ENCODE measurements at regions of chr5 and their contacts with region 1.

Region 1: DNA sequence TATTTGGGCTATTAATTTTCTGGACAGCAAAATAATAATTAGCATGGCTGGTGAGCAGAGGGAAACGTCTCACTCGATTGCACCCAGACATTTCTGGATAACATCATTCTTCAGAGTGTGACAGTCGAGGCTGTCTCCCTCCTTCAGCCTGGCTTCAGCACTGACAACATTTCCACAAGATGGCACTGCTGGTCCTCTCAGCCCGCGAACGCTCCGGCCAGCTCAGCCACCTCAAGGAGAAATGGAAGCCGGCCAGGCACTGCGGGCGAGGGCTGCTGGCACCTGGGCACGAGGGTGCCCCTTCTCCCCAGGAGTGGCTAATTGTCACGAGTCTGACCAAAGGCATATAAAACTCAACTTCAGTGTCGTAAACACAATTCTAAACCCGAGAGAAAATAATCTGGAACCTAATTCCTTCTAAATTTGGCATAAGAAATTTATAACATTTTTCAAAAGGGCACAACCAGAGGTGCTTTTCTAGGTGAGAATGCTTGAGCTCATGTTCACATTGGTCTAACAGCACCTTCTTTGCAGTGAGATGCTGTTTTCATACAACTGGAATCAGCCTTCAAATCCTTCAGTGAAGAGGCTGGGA is 65.9 kb downstream of the DAP start:
- DNase-seq: peak; percentile 23 to 42
- ATAC-seq: peak; percentile 50 to 69
- H3K4me3 ChIP-seq: no peak overlapping the region
- H3K27ac ChIP-seq: no peak overlapping the region
- H3K4me1 ChIP-seq: peaks cover 0 to 5% of the 10 kb centered on the region in 2 donors
- H3K27me3 ChIP-seq: no peaks in the 10 kb centered on the region
- CTCF ChIP-seq: peak; percentile 16 to 72 (median 45)
- POLR2A ChIP-seq: no peak

Region 2: DNA sequence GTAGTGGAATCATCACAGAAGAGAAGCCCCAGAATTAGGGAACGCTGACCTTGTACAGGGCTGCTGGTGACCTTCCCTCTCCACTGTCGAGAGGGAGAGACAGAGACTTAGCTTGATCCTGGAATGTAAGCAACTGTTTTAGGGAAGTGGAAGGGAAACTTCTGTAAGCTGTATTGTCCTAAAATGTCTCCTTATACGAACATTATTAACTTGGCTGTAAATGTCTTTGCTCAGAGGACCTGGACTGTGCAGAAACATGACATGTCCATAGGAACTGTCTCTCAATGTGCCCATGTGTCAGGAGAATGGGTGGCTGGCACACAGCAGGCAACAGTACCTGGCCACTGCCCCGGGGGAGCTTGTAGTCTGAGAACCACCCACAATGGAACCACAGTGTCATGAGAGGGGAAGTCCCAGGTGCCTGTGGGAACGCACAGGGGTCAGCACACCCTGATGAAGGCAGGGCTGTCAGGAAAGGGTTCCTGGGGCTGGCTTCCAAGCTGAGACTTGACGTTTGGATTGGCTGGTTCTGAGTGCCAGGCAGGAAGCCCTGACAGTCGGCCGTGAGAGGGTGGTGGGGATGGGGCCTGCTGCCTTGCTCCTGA is 31.9 kb after region 1 on chr5:
- in situ Hi-C with region 1: no loop called
- intact Hi-C with region 1: no loop called
- DNase-seq: no peak
- ATAC-seq: no peak
- H3K4me3 ChIP-seq: no peak overlapping the region
- H3K27ac ChIP-seq: peak overlapping the region in 1 of 4 donors; percentile 62
- H3K4me1 ChIP-seq: peaks cover 0 to 3% of the 10 kb centered on the region in 2 donors
- H3K27me3 ChIP-seq: no peaks in the 10 kb centered on the region
- CTCF ChIP-seq: no peak
- POLR2A ChIP-seq: no peak

Region 3: GRCh38 chr5:10789021-10789420 is 93.9 kb after region 1 on chr5:
- in situ Hi-C with region 1: no loop called
- intact Hi-C with region 1: no loop called
- DNase-seq: no peak
- ATAC-seq: no peak
- H3K4me3 ChIP-seq: no peak overlapping the region
- H3K27ac ChIP-seq: no peak overlapping the region
- H3K4me1 ChIP-seq: no peaks in the 10 kb centered on the region
- H3K27me3 ChIP-seq: no peaks in the 10 kb centered on the region
- CTCF ChIP-seq: no peak
- POLR2A ChIP-seq: no peak

Region 4: DNA sequence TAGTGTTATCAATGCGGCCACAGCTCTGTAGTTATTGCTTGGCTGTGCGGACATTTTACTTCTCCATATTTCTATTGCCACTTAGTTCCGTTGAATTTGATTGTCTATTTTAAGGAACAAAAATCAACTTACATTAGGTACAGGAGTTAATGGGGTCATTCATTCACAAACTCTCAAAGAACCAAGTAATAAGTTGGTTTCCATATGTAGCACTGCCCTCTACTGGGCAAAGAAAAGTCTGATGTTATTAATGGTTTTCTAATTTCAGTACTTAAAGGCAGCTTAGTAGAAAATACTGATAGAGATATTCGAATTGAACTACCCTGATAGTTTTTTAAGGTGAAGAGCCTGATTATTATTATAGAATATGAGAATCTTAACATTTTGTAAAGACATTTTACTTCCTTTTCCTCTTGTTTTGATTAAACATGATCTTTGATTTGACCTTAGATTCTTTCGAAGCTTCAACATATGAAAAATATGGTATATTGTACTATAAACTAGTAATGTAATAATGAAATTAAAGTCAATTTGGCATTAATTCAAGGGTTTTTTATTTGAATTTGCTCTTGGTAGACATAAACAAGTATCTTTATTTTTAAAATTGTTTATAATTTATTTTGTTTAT is 1328.6 kb after region 1 on chr5:
- in situ Hi-C with region 1: no loop called
- intact Hi-C with region 1: loop called (anchors 10 kb)
- DNase-seq: no peak
- ATAC-seq: no peak
- H3K4me3 ChIP-seq: no peak overlapping the region
- H3K27ac ChIP-seq: no peak overlapping the region
- H3K4me1 ChIP-seq: no peaks in the 10 kb centered on the region
- H3K27me3 ChIP-seq: no peaks in the 10 kb centered on the region
- CTCF ChIP-seq: peak in 1 of 5 experiments; percentile 11
- POLR2A ChIP-seq: no peak

Measured in gastrocnemius medialis (tissue), 4 donors.